Cardiac septum (tissue), 1 donor: ENCODE measurements at regions of chr2 and their contacts with region 1.

Region 1: DNA sequence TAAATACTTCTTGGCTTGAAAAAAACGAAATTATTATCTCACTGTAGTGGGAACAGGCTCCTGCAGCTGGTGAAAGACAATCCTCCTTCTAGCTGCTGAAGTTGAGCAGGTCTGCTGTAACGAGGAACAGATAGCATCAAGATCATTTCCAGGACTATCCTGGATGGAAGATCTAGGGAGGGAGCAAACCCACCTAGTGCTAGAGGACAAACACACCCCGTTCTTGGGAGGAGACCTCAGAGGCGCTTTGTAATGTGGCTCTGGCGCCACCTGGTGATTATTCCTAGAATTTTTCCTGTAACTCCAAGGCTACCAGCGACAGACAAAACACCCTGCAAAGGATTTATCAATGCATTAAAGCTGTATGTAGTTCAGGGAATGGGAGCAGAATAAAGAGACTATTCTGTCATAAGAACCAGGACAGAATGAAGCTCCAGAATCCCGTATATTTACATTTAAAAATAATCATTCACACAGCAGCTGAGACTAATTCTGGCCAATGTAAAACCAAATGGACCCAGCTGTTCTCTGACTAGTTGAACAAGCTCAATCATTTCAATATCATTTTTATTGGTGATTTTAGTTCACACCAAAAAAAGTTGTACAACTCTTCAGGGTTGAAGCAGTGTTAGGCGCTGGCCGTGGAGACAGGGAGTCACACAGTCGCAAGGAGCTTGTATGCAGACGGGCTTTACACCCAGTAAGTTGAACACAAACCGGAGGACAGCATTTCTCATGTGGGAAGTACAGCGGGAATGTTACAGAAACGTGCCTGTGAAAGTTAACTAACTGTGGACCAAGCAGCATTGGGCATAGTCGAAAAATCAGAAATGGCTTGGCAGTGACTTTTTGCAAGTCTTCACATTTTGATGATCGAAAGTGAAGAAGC is 290.3 kb downstream of the TRIB2 start:
- DNase-seq: no peak

Region 2: GRCh38 chr2:11829947-11830707 is 1176.9 kb before region 1 on chr2:
- intact Hi-C with region 1: loop called (anchors 1 kb)
- DNase-seq: no peak

Region 3: DNA sequence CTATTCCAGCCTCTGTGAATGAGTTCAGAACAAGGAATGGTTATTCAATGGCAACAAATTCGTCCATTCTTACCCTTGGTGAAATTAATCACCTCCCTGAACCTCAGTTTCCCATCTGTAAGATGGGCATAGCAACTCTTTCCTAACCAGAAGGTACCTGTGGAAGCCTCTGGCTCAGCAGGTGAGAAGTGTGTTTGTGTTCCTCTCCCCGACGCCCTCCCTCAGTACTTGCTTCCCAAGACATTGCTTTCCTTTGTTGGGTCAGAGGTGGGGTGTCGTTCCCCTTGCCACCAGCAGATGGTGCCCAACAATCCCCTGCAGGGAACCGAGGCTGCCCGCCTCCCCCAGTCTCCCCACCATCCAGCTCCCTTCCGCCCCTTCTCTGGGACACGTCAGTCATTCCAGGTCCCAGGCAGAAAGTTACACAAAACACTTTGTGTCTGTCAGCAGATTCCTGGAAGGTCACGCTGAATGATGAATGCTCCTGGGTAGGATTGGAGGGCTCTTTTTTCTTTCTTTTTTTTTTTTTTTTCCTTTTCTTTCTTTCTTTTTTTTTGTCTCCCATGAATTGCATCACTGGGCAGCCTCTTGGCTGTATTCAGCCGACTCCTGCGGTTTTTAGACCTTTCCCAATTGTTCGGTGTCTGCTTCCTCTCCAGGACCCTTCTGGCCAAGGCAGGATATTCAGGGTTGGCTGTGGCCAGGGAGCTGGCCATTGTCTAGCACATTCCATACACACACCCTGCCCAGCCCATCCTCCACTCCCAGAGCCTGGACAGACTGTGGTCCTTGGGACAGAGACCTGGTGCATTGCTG is 1143.4 kb before region 1 on chr2:
- intact Hi-C with region 1: loop called (anchors 2 kb)
- DNase-seq: peak; percentile 92

Region 4: DNA sequence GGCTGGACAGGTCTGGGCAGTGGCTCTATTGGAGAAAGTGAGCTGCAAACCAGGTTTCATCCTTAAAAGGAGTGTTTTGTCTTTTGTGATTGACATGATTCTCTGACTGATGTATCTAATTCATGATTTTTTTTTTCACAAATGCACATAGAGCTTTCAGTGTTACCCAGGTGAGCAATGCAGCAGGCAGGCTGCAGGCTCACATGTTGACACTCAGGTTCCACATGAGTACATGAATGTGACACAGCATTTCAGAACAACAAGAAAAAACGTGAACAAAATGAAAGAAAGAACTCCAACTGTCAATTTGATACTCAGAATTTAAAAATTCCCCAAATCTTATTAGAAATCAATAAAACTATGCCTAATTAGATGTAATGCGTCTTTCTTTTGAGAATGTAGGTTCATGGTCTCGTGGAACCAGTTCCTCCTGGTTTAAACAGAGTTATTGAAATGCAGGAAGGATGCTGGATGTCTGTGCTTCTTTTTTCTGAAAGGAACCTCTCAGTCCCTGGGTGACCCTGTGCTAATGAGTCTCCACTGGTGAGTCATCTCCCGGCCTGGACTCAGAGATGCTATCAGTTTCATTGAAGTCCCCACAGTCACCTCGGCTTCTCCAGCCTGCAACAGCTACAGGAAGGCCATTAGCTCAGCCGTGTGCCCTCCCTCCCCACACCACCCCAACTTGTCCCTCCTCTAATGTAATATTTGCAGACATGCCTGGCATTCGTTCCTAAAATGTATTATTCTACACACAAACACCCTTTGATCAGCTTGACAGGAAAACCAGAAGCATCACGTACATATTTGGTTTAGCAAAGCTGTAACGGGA is 830.2 kb before region 1 on chr2:
- intact Hi-C with region 1: loop called (anchors 10 kb)
- DNase-seq: no peak

Region 5: DNA sequence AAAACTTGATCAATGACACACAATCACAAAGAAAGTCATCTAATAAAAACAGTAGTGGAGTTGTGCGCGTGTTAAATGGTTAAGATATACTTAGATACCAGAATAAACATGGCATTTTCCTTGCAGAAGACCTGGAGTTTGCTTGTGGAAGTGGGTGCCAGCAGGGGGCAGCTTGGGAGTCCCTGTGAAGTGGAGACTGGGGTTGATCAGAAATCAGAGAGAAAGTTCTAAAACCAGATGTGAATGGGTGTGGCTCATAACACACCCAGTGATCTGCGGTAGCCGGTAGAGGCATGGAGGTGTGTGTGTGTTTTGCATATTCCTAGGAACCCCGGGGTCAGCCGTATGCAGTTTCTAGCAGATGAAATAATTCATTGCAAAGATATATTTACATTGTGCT is 590.5 kb before region 1 on chr2:
- intact Hi-C with region 1: loop called (anchors 10 kb)
- DNase-seq: no peak

Region 6: DNA sequence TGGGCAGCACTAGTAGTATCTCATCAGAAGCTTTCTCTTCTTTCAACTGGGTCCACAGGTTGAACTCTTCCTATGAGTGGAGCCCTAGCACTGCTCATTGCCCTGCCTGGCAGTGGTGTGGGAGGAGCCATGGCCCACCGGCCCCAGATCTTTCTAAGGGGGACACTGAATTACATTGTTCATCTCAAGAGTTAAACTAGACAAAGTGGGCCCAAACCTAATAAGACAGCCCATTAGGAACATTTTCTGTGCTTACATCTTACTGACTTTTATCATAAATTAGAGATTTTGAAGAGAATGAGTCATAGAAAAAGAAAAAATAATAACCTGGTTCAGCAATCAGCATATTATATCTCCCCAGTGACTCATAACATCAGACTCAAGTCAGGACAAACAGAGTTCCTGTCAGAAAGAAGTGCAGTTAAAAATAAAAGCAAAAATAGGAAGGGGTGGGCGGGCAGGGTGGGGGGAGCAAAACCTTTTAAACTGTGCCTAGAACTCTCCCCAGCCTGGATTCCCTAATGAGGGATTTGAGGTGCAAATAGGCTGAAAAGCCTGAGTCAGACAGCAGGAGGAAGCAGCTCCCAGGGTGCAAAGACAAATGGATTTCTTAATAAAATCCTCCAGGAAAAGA is 451.9 kb before region 1 on chr2:
- intact Hi-C with region 1: loop called (anchors 10 kb)
- DNase-seq: no peak